ENCODE measurements at regions of chr7 and their contacts with region 1.

Region 1: DNA sequence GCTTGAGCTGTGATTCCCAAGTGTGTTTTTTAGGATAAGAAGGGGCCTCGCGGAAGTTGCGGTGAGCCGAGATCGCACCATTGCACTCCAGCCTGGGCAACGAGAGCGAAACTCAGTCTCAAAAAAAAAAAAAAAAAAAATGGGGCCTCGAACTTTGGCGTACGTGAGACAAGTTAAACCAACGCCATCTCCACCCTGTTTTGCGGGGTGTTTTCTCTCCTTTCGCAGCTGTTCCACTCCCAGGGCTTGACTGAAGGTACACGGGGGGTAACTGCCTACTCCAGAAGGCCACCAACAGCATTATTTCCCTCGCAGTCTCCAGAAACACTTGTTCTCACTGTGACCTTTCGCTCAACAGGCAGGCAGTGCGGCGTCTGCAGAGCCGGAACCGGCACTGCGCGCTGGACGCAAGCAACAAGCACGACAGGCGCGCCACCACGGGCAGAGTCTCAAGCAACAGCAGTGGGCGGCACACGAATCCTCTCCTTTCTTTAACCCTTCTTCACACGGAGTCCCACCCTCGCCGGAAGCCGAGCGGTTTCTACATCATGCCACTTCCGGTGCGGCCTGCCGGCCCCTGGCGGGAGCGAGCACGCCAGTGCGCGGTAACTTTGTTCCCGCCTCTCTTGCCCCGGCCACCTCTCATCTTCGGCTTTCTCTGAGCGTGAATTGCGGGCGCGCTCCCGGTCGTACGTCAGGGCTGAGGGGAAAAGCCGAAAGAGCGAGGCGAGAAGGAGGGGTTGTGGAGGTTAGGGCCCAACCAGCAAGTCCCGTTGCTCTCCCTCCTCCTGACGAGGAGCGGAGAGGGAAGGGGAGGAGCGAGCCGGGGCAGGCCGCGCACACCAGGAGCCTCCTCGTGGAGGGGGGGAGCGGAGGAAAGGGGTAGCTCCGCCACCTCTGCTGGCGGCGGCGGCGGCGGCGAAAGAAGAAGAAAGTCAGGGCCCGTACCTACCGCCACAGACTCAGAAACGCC is 814 bp upstream of the CDK13 start:
- DNase-seq: peak; percentile 100
- H3K4me3 ChIP-seq: peak overlapping the region; percentile 85 to 97 (median 95)
- H3K27ac ChIP-seq: peak overlapping the region; percentile 96
- H3K4me1 ChIP-seq: peaks cover 5% of the 10 kb centered on the region
- H3K27me3 ChIP-seq: no peaks in the 10 kb centered on the region
- CTCF ChIP-seq: no peak

Region 2: GRCh38 chr7:39746103-39746819 is 203.0 kb before region 1 on chr7:
- CTCF ChIA-PET with region 1: no interaction called
- dilution Hi-C with region 1: no loop called
- in situ Hi-C with region 1: no loop called
- intact Hi-C with region 1: loop called (anchors 5 kb)
- DNase-seq: peak; percentile 69
- H3K4me3 ChIP-seq: no peak overlapping the region
- H3K27ac ChIP-seq: peak overlapping the region; percentile 29
- H3K4me1 ChIP-seq: peaks cover 41% of the 10 kb centered on the region
- H3K27me3 ChIP-seq: no peaks in the 10 kb centered on the region
- CTCF ChIP-seq: peak; percentile 79 to 89

Region 3: DNA sequence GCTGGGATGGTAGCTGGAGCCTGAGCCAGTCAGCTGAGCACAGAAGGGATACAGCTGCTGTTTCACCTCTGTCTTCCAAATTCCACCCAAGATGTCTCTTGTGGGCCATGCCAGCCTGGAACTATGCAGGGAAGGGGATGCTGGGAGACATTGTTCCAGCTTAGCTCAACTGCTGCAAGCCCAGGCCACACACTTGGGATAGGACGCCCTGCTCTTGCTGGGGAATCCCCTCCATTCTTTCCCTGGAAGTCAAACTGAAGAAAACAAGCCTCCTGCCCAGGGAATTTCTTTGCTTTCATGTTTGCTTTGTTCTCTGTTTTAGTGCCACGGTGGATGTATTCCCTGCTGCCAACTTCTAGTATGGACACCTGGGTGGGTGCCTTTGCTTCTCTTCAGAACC is 54.3 kb before region 1 on chr7:
- CTCF ChIA-PET with region 1: no interaction called
- dilution Hi-C with region 1: loop called (anchors 5 kb)
- in situ Hi-C with region 1: no loop called
- intact Hi-C with region 1: loop called (anchors 1 kb)
- DNase-seq: peak; percentile 32
- H3K4me3 ChIP-seq: no peak overlapping the region
- H3K27ac ChIP-seq: no peak overlapping the region
- H3K4me1 ChIP-seq: no peaks in the 10 kb centered on the region
- H3K27me3 ChIP-seq: no peaks in the 10 kb centered on the region
- CTCF ChIP-seq: no peak

Region 4: GRCh38 chr7:39904077-39904486 is 45.2 kb before region 1 on chr7:
- CTCF ChIA-PET with region 1: no interaction called
- dilution Hi-C with region 1: loop called (anchors 5 kb)
- in situ Hi-C with region 1: no loop called
- intact Hi-C with region 1: no loop called
- DNase-seq: no peak
- H3K4me3 ChIP-seq: no peak overlapping the region
- H3K27ac ChIP-seq: no peak overlapping the region
- H3K4me1 ChIP-seq: no peaks in the 10 kb centered on the region
- H3K27me3 ChIP-seq: no peaks in the 10 kb centered on the region
- CTCF ChIP-seq: no peak

Region 5: GRCh38 chr7:40008223-40008815 is 59.1 kb after region 1 on chr7:
- CTCF ChIA-PET with region 1: no interaction called
- dilution Hi-C with region 1: no loop called
- in situ Hi-C with region 1: no loop called
- intact Hi-C with region 1: loop called (anchors 5 kb)
- DNase-seq: peak; percentile 77
- H3K4me3 ChIP-seq: no peak overlapping the region
- H3K27ac ChIP-seq: peak overlapping the region; percentile 22
- H3K4me1 ChIP-seq: peaks cover 13% of the 10 kb centered on the region
- H3K27me3 ChIP-seq: no peaks in the 10 kb centered on the region
- CTCF ChIP-seq: no peak

Region 6: DNA sequence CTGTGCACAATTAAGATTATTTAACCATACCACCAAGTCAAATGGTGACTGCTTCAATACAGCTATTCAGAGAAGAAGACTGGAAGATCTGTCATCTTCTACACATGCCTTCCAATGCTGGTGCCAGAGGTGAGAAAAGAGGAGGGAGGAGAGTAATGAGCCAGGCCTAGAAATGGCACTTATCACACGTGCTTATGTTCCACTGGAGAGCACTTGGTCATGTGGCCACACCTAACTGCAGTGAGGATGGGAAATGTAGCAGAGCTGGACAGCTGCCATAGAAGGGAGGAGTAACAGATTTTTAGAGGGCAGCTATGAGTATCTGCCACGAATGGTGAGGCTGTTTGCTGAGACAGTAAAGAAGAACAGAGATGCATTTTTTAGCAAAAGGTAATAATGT is 108.0 kb after region 1 on chr7:
- CTCF ChIA-PET with region 1: interaction called, 4 read pairs
- dilution Hi-C with region 1: no loop called
- in situ Hi-C with region 1: no loop called
- intact Hi-C with region 1: loop called (anchors 1 kb)
- DNase-seq: peak; percentile 11
- H3K4me3 ChIP-seq: no peak overlapping the region
- H3K27ac ChIP-seq: no peak overlapping the region
- H3K4me1 ChIP-seq: no peaks in the 10 kb centered on the region
- H3K27me3 ChIP-seq: no peaks in the 10 kb centered on the region
- CTCF ChIP-seq: no peak

Region 7: GRCh38 chr7:40120020-40120419 is 170.8 kb after region 1 on chr7:
- CTCF ChIA-PET with region 1: no interaction called
- dilution Hi-C with region 1: no loop called
- in situ Hi-C with region 1: no loop called
- intact Hi-C with region 1: no loop called
- DNase-seq: no peak
- H3K4me3 ChIP-seq: no peak overlapping the region
- H3K27ac ChIP-seq: no peak overlapping the region
- H3K4me1 ChIP-seq: peaks cover 5% of the 10 kb centered on the region
- H3K27me3 ChIP-seq: no peaks in the 10 kb centered on the region
- CTCF ChIP-seq: no peak

Region 8: GRCh38 chr7:40134428-40135316 is 185.4 kb after region 1 on chr7 and contains the starts of genes MPLKIP and SUGCT:
- CTCF ChIA-PET with region 1: no interaction called
- dilution Hi-C with region 1: no loop called
- in situ Hi-C with region 1: no loop called
- intact Hi-C with region 1: loop called (anchors 2 kb)
- DNase-seq: peak; percentile 85
- H3K4me3 ChIP-seq: peak within 1 kb of the TSS; percentile 72 to 96 (median 80)
- H3K27ac ChIP-seq: peak within 1 kb of the TSS; percentile 88
- H3K4me1 ChIP-seq: peaks cover 3% of the 10 kb centered on the region
- H3K27me3 ChIP-seq: no peaks in the 10 kb centered on the region
- CTCF ChIP-seq: peak; percentile 65 to 87
- total RNA-seq, gene MPLKIP: 17.8 to 45.4 TPM
- total RNA-seq, gene SUGCT: 12.3 to 138 TPM